Stomach (tissue), 19 donors: ENCODE measurements at regions of chr9 and their contacts with region 1.

Region 1: GRCh38 chr9:89732295-89732938 is 127.6 kb downstream of the GADD45G start:
- DNase-seq: no peak
- H3K4me3 ChIP-seq: no peak overlapping the region
- H3K27ac ChIP-seq: peak overlapping the region in 2 of 5 donors; percentile 40 to 68
- H3K4me1 ChIP-seq: peaks cover 20 to 30% (median 23%) of the 10 kb centered on the region in 4 donors
- H3K27me3 ChIP-seq: no peaks in the 10 kb centered on the region
- CTCF ChIP-seq: no peak
- EP300 ChIP-seq: no peak
- POLR2A ChIP-seq: no peak

Region 2: DNA sequence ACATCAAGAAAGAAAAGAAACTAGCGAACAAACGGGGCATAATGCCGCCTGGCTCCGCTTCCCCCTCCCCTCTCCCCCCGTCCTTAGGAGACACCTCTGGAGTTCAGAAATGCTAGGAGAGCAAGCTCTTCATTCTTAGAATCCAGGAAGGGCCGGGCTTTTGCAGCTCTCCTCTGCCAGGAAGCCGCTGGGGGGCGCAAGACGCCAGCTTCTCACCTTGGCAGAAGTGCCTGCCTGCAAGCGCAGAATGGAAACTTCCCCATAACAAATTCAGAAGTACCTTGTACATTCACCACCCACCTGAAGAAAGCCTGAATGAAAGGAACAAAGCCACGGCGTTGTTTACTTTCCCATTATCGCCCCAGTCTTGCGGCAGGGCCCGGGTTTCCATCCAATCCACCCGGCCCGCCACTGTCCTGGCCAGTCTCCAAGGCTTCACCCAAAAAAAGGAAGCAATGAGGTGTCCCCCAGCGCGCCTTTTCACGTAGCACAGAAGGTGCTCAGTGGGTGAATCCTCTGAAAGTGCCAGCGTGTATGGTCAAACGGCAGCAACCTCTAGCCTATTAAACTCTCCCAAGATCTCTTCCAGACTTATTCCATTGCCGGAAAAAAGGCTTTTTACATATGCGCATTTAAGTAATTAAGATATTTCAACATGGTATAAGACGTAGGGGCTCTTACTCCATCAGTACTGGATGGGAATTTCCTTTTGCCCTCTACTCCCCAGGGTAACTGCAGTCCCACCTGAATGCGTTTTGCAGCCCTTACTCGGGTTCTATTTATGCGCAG is 129.2 kb before region 1 on chr9:
- intact Hi-C with region 1: loop called (anchors 10 kb)
- DNase-seq: peak; percentile 95 to 96
- H3K4me3 ChIP-seq: peak overlapping the region; percentile 73 to 92 (median 84)
- H3K27ac ChIP-seq: peak overlapping the region; percentile 77 to 98 (median 95)
- H3K4me1 ChIP-seq: peaks cover 28 to 46% (median 43%) of the 10 kb centered on the region in 4 donors
- H3K27me3 ChIP-seq: no peaks in the 10 kb centered on the region
- CTCF ChIP-seq: peak in 5 of 7 experiments; percentile 71 to 90 (median 84)
- EP300 ChIP-seq: no peak
- POLR2A ChIP-seq: no peak

Region 3: DNA sequence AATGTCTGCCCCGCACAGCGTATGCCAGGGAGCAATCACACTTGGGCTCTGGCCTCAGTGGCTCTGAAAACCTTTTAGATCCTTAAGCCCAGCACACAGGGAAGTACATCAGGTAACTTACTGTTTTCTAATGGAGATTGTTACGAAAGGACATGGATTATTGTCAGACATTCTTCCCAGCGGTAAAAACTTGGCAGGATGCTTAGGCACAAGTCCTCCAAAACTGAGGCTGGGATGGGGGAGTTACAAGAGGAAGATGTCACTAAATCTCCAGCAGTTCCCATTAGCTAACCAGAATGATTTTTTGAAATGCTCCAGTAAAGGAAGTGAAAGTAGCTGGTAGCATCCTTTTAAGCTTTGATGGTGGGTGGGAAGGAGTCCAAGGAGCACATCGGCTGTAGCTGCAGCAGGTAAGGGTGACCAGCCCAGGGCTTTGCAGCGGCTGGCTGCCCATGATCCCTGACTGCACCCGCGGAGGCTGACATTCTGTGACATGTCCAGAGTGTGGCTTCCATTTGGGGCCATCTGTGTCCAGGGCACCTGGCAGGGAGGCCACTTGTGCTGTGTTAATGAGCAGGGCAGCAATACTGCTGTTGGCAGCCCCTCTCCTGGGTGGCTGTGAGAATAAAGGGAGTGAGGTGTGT is 38.2 kb after region 1 on chr9:
- intact Hi-C with region 1: no loop called
- DNase-seq: no peak
- H3K4me3 ChIP-seq: no peak overlapping the region
- H3K27ac ChIP-seq: no peak overlapping the region
- H3K4me1 ChIP-seq: no peaks in the 10 kb centered on the region
- H3K27me3 ChIP-seq: no peaks in the 10 kb centered on the region
- CTCF ChIP-seq: no peak
- EP300 ChIP-seq: no peak
- POLR2A ChIP-seq: no peak

Region 4: GRCh38 chr9:89815903-89816573 is 83.6 kb after region 1 on chr9:
- intact Hi-C with region 1: no loop called
- DNase-seq: peak in 1 of 2 donors; percentile 59
- H3K4me3 ChIP-seq: no peak overlapping the region
- H3K27ac ChIP-seq: no peak overlapping the region
- H3K4me1 ChIP-seq: peaks cover 0 to 7% (median 3%) of the 10 kb centered on the region in 4 donors
- H3K27me3 ChIP-seq: peaks cover 0 to 17% (median 0%) of the 10 kb centered on the region in 3 donors
- CTCF ChIP-seq: no peak
- EP300 ChIP-seq: no peak
- POLR2A ChIP-seq: no peak